ENCODE measurements at regions of chr15 and their contacts with region 1.

Region 1: DNA sequence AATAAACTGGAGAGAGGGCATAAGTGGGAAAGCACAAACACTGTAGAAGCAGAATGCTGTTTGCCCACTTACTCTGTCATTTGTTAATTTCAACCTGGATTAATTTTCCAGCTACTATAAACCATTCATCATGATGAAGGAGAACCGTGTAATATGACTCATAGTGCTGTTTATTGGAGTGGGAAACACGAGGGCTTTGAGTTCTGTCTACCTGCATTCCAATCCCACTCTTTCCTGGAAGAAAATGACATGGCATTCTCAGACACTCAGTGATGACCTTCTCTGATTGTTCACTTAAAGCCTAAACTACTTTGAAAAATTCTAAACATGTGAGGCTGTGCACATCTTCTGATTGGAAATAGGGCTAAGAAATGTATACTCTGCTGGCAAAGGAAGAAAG is 826.7 kb downstream of the AGBL1 start:
- DNase-seq: no peak
- ATAC-seq: no peak
- H3K4me3 ChIP-seq: no peak overlapping the region
- H3K27ac ChIP-seq: no peak overlapping the region
- H3K4me1 ChIP-seq: peaks cover 0 to 5% (median 0%) of the 10 kb centered on the region in 9 donors
- H3K27me3 ChIP-seq: no peaks in the 10 kb centered on the region
- CTCF ChIP-seq: no peak

Region 2: GRCh38 chr15:86629409-86630356 is 276.7 kb before region 1 on chr15:
- intact Hi-C with region 1: loop called in 2 of 10 experiments (anchors 5 to 10 kb)
- DNase-seq: no peak
- ATAC-seq: no peak
- H3K4me3 ChIP-seq: no peak overlapping the region
- H3K27ac ChIP-seq: no peak overlapping the region
- H3K4me1 ChIP-seq: peaks cover 0 to 5% (median 0%) of the 10 kb centered on the region in 9 donors
- H3K27me3 ChIP-seq: no peaks in the 10 kb centered on the region
- CTCF ChIP-seq: no peak

Region 3: DNA sequence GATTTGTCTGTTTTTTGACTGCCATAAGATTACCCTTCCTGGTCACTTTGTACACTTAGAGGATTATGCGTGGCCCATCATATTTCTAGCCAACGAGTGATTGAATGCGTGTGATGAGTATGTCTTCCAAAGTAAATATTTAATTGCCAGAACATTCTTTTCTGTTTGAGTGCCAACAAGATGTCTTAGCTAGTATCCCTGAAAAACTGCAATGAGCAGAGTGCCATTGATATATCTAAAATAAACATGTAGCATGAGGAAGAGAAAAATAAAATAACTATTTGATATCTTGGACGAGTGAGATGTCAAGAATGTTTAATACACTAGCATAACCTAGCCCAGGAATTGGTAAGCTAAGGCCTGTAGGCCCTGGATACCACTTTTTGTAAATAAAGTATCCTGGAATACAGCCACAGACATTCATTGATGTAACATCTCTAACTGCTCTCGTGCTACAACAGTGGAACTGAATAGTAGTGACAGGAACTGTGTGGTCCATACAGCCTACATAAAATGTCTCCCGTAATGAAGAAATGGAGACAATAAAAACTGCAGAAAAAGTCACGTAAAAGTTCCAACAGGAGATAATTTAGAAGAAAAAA is 42.2 kb after region 1 on chr15:
- intact Hi-C with region 1: no loop called
- DNase-seq: no peak
- ATAC-seq: no peak
- H3K4me3 ChIP-seq: no peak overlapping the region
- H3K27ac ChIP-seq: no peak overlapping the region
- H3K4me1 ChIP-seq: no peaks in the 10 kb centered on the region
- H3K27me3 ChIP-seq: no peaks in the 10 kb centered on the region
- CTCF ChIP-seq: no peak